PC-9 (cell line): ENCODE measurements at regions of chr1 and their contacts with region 1.

Region 1: GRCh38 chr1:27556781-27557595 is 47.0 kb downstream of the AHDC1 start:
- DNase-seq: peak; percentile 84 to 94
- H3K4me3 ChIP-seq: peak overlapping the region; percentile 29; the same call in 1 of the 2 replicates
- H3K27ac ChIP-seq: peak overlapping the region; percentile 88
- H3K4me1 ChIP-seq: peaks cover 22% of the 10 kb centered on the region
- H3K27me3 ChIP-seq: no peaks in the 10 kb centered on the region
- CTCF ChIP-seq: peak; percentile 91

Region 2: GRCh38 chr1:26450908-26451307 is 1106.1 kb before region 1 on chr1:
- CTCF ChIA-PET with region 1: no interaction called
- POLR2A ChIA-PET with region 1: no interaction called
- intact Hi-C with region 1: no loop called
- DNase-seq: peak; percentile 22 to 52
- H3K4me3 ChIP-seq: no peak overlapping the region
- H3K27ac ChIP-seq: no peak overlapping the region
- H3K4me1 ChIP-seq: no peaks in the 10 kb centered on the region
- H3K27me3 ChIP-seq: no peaks in the 10 kb centered on the region
- CTCF ChIP-seq: no peak

Region 3: GRCh38 chr1:27395441-27396195 is 161.4 kb before region 1 on chr1:
- CTCF ChIA-PET with region 1: interaction called, 16 read pairs
- POLR2A ChIA-PET with region 1: no interaction called
- intact Hi-C with region 1: loop called (anchors 5 kb)
- DNase-seq: peak; percentile 38 to 83
- H3K4me3 ChIP-seq: no peak overlapping the region
- H3K27ac ChIP-seq: no peak overlapping the region
- H3K4me1 ChIP-seq: no peaks in the 10 kb centered on the region
- H3K27me3 ChIP-seq: no peaks in the 10 kb centered on the region
- CTCF ChIP-seq: peak; percentile 82

Region 4: GRCh38 chr1:27489910-27490741 is 66.9 kb before region 1 on chr1 and contains the start of gene WASF2:
- CTCF ChIA-PET with region 1: interaction called, 3 read pairs
- POLR2A ChIA-PET with region 1: no interaction called
- intact Hi-C with region 1: loop called (anchors 2 kb)
- DNase-seq: peak; percentile 87 to 96
- H3K4me3 ChIP-seq: peak within 1 kb of the TSS; percentile 88
- H3K27ac ChIP-seq: peak within 1 kb of the TSS; percentile 94
- H3K4me1 ChIP-seq: peaks cover 11% of the 10 kb centered on the region
- H3K27me3 ChIP-seq: no peaks in the 10 kb centered on the region
- CTCF ChIP-seq: no peak
- total RNA-seq, gene WASF2: 96.5 and 134 TPM in 2 replicates

Region 5: GRCh38 chr1:27568300-27569087 is 11.5 kb after region 1 on chr1:
- CTCF ChIA-PET with region 1: interaction called, 22 read pairs
- POLR2A ChIA-PET with region 1: interaction called, 9 read pairs
- intact Hi-C with region 1: loop called (anchors 1 kb)
- DNase-seq: peak; percentile 82 to 98
- H3K4me3 ChIP-seq: peak overlapping the region; percentile 53; the same call in 1 of the 2 replicates
- H3K27ac ChIP-seq: no peak overlapping the region
- H3K4me1 ChIP-seq: peaks cover 32% of the 10 kb centered on the region
- H3K27me3 ChIP-seq: no peaks in the 10 kb centered on the region
- CTCF ChIP-seq: peak; percentile 58

Region 6: DNA sequence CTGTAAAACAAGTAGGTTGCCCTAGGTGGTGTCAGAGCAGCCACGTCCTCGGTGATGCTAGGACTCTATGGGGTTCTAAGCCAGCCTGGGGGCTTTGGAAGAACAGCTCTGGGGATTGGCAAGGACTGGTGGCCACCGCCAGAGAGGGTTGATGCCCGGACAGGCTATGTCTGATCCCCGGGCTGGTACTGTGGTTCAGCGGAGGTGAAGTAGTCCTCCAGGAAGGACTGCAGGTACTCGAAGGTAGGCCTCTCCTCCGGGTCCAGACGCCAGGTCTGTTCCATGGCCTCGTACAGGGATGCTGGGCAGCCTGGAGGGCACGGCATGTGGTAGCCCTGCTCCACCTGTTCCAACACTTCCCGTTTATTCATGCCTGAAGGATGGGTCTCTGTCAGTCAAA is 55.8 kb after region 1 on chr1:
- CTCF ChIA-PET with region 1: interaction called, 4 read pairs
- POLR2A ChIA-PET with region 1: interaction called, 51 read pairs
- intact Hi-C with region 1: no loop called
- DNase-seq: no peak
- H3K4me3 ChIP-seq: no peak overlapping the region
- H3K27ac ChIP-seq: no peak overlapping the region
- H3K4me1 ChIP-seq: no peaks in the 10 kb centered on the region
- H3K27me3 ChIP-seq: no peaks in the 10 kb centered on the region; the same call in 1 of the 2 replicates
- CTCF ChIP-seq: no peak

Region 7: GRCh38 chr1:27704958-27705357 is 148.0 kb after region 1 on chr1:
- CTCF ChIA-PET with region 1: no interaction called
- POLR2A ChIA-PET with region 1: no interaction called
- intact Hi-C with region 1: no loop called
- DNase-seq: no peak
- H3K4me3 ChIP-seq: no peak overlapping the region
- H3K27ac ChIP-seq: no peak overlapping the region
- H3K4me1 ChIP-seq: no peaks in the 10 kb centered on the region
- H3K27me3 ChIP-seq: no peaks in the 10 kb centered on the region
- CTCF ChIP-seq: no peak

Region 8: GRCh38 chr1:28160782-28161266 is 603.8 kb after region 1 on chr1:
- CTCF ChIA-PET with region 1: no interaction called
- POLR2A ChIA-PET with region 1: no interaction called
- intact Hi-C with region 1: no loop called
- DNase-seq: no peak
- H3K4me3 ChIP-seq: no peak overlapping the region
- H3K27ac ChIP-seq: no peak overlapping the region
- H3K4me1 ChIP-seq: no peaks in the 10 kb centered on the region
- H3K27me3 ChIP-seq: no peaks in the 10 kb centered on the region
- CTCF ChIP-seq: no peak